CD8-positive, alpha-beta T cell (primary cell): ENCODE measurements at regions of chr6 and their contacts with region 1.

Region 1: GRCh38 chr6:32952817-32953739 is at the start of gene HLA-DMA:
- DNase-seq: peak; percentile 55 to 92 (median 77)
- ATAC-seq: peak; percentile 98
- H3K4me3 ChIP-seq: peak within 1 kb of the TSS; percentile 49 to 52
- H3K4me3 Mint-ChIP-seq: peak within 1 kb of the TSS; percentile 85
- H3K27ac ChIP-seq: peak within 1 kb of the TSS; percentile 28 to 66
- H3K27ac Mint-ChIP-seq: peak within 1 kb of the TSS; percentile 93
- H3K4me1 ChIP-seq: peaks cover 29% of the 10 kb centered on the region
- H3K4me1 Mint-ChIP-seq: peaks cover 55% of the 10 kb centered on the region
- H3K27me3 ChIP-seq: no peaks in the 10 kb centered on the region
- H3K27me3 Mint-ChIP-seq: no peaks in the 10 kb centered on the region
- CTCF ChIP-seq: peak; percentile 86
- total RNA-seq, gene HLA-DMA: 25.9 to 32.3 TPM

Region 2: GRCh38 chr6:32885698-32886286 is 67.3 kb before region 1 on chr6:
- CTCF ChIA-PET with region 1: interaction called, 126 read pairs
- POLR2A ChIA-PET with region 1: interaction called, 9 read pairs
- intact Hi-C with region 1: loop called (anchors 1 to 2 kb)
- DNase-seq: peak in 2 of 9 experiments; percentile 78 to 85
- ATAC-seq: peak; percentile 71
- H3K4me3 ChIP-seq: no peak overlapping the region
- H3K4me3 Mint-ChIP-seq: no peak overlapping the region
- H3K27ac ChIP-seq: no peak overlapping the region
- H3K27ac Mint-ChIP-seq: no peak overlapping the region
- H3K4me1 ChIP-seq: no peaks in the 10 kb centered on the region
- H3K4me1 Mint-ChIP-seq: no peaks in the 10 kb centered on the region
- H3K27me3 ChIP-seq: no peaks in the 10 kb centered on the region
- H3K27me3 Mint-ChIP-seq: no peaks in the 10 kb centered on the region
- CTCF ChIP-seq: peak; percentile 77

Region 3: GRCh38 chr6:32894080-32895005 is 58.7 kb before region 1 on chr6:
- CTCF ChIA-PET with region 1: interaction called, 10 read pairs
- POLR2A ChIA-PET with region 1: interaction called, 8 read pairs
- intact Hi-C with region 1: loop called (anchors 2 kb)
- DNase-seq: peak; percentile 88 to 98 (median 95)
- ATAC-seq: peak; percentile 96
- H3K4me3 ChIP-seq: peak overlapping the region; percentile 89 to 92
- H3K4me3 Mint-ChIP-seq: peak overlapping the region; percentile 99
- H3K27ac ChIP-seq: peak overlapping the region; percentile 62 to 89
- H3K27ac Mint-ChIP-seq: peak overlapping the region; percentile 97
- H3K4me1 ChIP-seq: peaks cover 20% of the 10 kb centered on the region
- H3K4me1 Mint-ChIP-seq: peaks cover 46% of the 10 kb centered on the region
- H3K27me3 ChIP-seq: no peaks in the 10 kb centered on the region
- H3K27me3 Mint-ChIP-seq: no peaks in the 10 kb centered on the region
- CTCF ChIP-seq: no peak

Region 4: GRCh38 chr6:32912951-32913350 is 40.1 kb before region 1 on chr6:
- CTCF ChIA-PET with region 1: interaction called, 10 read pairs
- POLR2A ChIA-PET with region 1: no interaction called
- intact Hi-C with region 1: no loop called
- DNase-seq: no peak
- ATAC-seq: no peak
- H3K4me3 ChIP-seq: no peak overlapping the region
- H3K4me3 Mint-ChIP-seq: no peak overlapping the region
- H3K27ac ChIP-seq: no peak overlapping the region
- H3K27ac Mint-ChIP-seq: no peak overlapping the region
- H3K4me1 ChIP-seq: no peaks in the 10 kb centered on the region
- H3K4me1 Mint-ChIP-seq: no peaks in the 10 kb centered on the region
- H3K27me3 ChIP-seq: no peaks in the 10 kb centered on the region
- H3K27me3 Mint-ChIP-seq: peaks cover 15% of the 10 kb centered on the region
- CTCF ChIP-seq: no peak

Region 5: DNA sequence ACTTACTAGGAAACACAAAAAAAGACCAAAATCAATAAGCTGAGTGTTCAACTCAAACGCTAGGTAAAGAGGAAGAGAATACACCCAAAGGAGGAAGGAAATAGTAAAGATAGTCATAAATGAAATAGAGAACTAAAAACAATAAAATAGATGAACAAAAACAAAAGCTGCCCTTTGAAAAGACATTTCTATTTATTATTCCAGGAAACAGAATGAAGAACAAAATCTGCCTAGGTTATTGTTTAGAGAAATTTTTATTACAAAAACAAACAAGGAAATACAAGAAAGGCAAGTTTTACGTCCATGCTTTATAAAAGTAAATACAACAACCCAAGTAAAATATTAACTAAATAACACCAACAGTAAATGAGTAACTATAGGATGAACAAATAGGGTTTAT is 32.4 kb before region 1 on chr6:
- CTCF ChIA-PET with region 1: interaction called, 11 read pairs
- POLR2A ChIA-PET with region 1: interaction called, 4 read pairs
- intact Hi-C with region 1: no loop called
- DNase-seq: no peak
- ATAC-seq: no peak
- H3K4me3 ChIP-seq: no peak overlapping the region
- H3K4me3 Mint-ChIP-seq: no peak overlapping the region
- H3K27ac ChIP-seq: no peak overlapping the region
- H3K27ac Mint-ChIP-seq: no peak overlapping the region
- H3K4me1 ChIP-seq: no peaks in the 10 kb centered on the region
- H3K4me1 Mint-ChIP-seq: no peaks in the 10 kb centered on the region
- H3K27me3 ChIP-seq: peaks cover 0 to 3% of the 10 kb centered on the region in 2 experiments
- H3K27me3 Mint-ChIP-seq: peaks cover 6% of the 10 kb centered on the region
- CTCF ChIP-seq: no peak

Region 6: DNA sequence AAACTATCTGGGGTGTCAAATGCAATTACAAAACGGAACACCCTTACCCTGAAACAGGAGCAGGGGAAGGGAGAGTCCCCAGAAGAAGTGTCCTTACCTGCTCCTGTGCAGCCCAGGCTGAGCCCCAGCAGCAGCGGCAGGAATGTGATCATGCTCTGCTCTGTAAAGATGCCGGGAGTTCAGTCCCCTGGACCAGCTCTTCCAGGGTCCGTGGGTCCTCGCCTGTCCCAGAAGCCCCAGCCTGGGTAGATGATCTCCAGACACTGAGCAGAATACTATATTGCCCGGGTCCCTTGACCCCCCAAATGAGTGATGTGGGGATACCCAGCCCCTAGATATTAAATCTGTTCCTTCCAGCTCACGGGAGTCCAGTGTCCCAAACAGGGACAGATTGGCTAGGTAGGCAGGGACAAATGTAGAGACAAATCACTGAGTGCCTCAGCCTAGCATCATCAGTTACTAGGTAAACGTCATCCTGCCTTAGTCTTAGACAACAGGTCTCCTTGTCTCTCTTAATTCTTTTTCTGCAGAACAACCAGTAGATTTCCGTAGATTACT is 12.3 kb before region 1 on chr6 and contains the start of gene HLA-DMB:
- CTCF ChIA-PET with region 1: interaction called, 326 read pairs
- POLR2A ChIA-PET with region 1: interaction called, 21 read pairs
- intact Hi-C with region 1: loop called (anchors 1 kb)
- DNase-seq: peak in 7 of 9 experiments; percentile 18 to 91 (median 51)
- ATAC-seq: peak; percentile 78
- H3K4me3 ChIP-seq: peak within 1 kb of the TSS; percentile 64 to 79
- H3K4me3 Mint-ChIP-seq: peak within 1 kb of the TSS; percentile 94
- H3K27ac ChIP-seq: peak within 1 kb of the TSS; percentile 72 to 91
- H3K27ac Mint-ChIP-seq: peak within 1 kb of the TSS; percentile 97
- H3K4me1 ChIP-seq: peaks cover 61% of the 10 kb centered on the region
- H3K4me1 Mint-ChIP-seq: peaks cover 62% of the 10 kb centered on the region
- H3K27me3 ChIP-seq: no peaks in the 10 kb centered on the region
- H3K27me3 Mint-ChIP-seq: no peaks in the 10 kb centered on the region
- CTCF ChIP-seq: no peak
- total RNA-seq, gene HLA-DMB: 8.9 to 9.9 TPM

Region 7: GRCh38 chr6:33040157-33040556 is 87.1 kb after region 1 on chr6:
- CTCF ChIA-PET with region 1: no interaction called
- POLR2A ChIA-PET with region 1: no interaction called
- intact Hi-C with region 1: no loop called
- DNase-seq: no peak
- ATAC-seq: no peak
- H3K4me3 ChIP-seq: no peak overlapping the region
- H3K4me3 Mint-ChIP-seq: no peak overlapping the region
- H3K27ac ChIP-seq: no peak overlapping the region
- H3K27ac Mint-ChIP-seq: no peak overlapping the region
- H3K4me1 ChIP-seq: no peaks in the 10 kb centered on the region
- H3K4me1 Mint-ChIP-seq: no peaks in the 10 kb centered on the region
- H3K27me3 ChIP-seq: no peaks in the 10 kb centered on the region
- H3K27me3 Mint-ChIP-seq: peaks cover 11% of the 10 kb centered on the region
- CTCF ChIP-seq: no peak